ENCODE measurements at regions of chr17 and their contacts with region 1.

Region 1: DNA sequence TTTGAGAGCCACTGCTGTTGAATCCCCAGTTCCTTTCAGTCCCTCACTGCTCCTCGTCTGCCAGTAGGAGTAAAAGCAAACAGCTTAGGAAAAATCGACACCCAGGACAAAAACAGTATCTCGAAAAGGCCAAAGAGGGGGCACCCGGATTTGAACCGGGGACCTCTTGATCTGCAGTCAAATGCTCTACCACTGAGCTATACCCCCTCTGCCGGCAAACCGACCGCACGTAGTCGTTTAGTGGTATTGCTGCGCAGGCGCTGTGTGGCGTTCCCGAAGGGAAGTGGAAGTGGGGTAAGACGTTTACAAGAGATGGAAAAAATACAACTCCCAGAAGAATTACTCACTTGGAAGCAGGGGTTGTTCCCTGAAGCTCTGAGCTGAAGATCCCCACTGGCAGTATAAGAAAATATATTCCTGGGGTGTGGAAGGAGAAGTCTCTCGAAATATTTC is 2.2 kb upstream of the PLXDC1 start:
- DNase-seq: peak; percentile 93
- H3K4me3 ChIP-seq: peak overlapping the region; percentile 35 to 82 (median 68)
- H3K27ac ChIP-seq: peak overlapping the region; percentile 0
- H3K4me1 ChIP-seq: peaks cover 8% of the 10 kb centered on the region
- H3K27me3 ChIP-seq: peaks cover 19 to 27% of the 10 kb centered on the region in 2 experiments
- CTCF ChIP-seq: peak in 1 of 2 donors; percentile 4
- POLR2A ChIP-seq: no peak

Region 2: DNA sequence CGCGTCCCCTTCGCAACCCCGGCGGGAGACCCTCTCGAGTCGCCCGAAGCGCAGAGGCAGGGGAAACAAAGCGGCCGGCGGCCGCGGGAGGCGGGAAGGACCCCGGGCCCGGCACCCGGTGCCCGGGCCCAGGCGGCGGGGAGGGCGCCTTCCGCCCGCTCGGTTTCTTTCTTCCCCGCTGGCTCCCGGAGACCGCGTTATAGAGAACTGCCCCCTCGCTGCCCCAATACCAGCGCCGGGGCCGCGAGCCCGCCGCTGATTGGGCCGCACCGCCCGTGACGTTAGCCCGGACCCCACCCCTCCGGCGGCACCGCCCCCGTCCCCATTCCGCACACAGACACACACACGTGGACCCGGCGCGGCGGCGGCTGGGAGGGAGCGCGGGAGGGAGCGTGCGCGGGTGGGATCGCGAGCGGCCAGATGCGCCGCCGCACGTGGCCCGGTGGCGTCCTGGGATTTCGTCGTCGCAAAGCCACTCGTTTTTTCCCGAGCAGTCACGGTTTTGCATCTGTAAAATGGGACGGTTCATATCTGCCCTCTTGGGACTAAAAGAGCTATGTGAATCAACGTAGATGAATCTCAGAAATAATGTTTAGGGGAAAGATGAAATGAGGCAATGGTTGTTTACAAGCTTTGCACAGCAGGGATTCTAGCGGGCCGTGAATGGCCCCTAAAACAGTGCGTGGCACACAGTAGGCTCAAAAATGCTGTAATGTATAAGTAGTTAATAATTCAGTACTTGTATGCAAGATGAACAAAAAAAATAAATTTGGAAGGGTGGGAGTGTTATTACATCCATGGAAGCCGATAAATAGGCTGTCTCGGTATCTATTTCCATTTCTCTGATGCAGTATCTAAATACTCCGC is 478.6 kb before region 1 on chr17 and contains the start of gene EPOP:
- CTCF ChIA-PET with region 1: interaction called, 4 read pairs
- POLR2A ChIA-PET with region 1: no interaction called
- dilution Hi-C with region 1: no loop called
- intact Hi-C with region 1: loop called (anchors 1 kb)
- DNase-seq: peak; percentile 85
- H3K4me3 ChIP-seq: peak within 1 kb of the TSS; percentile 32 to 63 (median 41)
- H3K27ac ChIP-seq: no peak within 1 kb of the TSS
- H3K4me1 ChIP-seq: peaks cover 14% of the 10 kb centered on the region
- H3K27me3 ChIP-seq: peaks cover 28 to 39% of the 10 kb centered on the region in 2 experiments
- CTCF ChIP-seq: no peak
- POLR2A ChIP-seq: no peak
- total RNA-seq, gene EPOP: 2.6 and 2.9 TPM in 2 replicates

Region 3: DNA sequence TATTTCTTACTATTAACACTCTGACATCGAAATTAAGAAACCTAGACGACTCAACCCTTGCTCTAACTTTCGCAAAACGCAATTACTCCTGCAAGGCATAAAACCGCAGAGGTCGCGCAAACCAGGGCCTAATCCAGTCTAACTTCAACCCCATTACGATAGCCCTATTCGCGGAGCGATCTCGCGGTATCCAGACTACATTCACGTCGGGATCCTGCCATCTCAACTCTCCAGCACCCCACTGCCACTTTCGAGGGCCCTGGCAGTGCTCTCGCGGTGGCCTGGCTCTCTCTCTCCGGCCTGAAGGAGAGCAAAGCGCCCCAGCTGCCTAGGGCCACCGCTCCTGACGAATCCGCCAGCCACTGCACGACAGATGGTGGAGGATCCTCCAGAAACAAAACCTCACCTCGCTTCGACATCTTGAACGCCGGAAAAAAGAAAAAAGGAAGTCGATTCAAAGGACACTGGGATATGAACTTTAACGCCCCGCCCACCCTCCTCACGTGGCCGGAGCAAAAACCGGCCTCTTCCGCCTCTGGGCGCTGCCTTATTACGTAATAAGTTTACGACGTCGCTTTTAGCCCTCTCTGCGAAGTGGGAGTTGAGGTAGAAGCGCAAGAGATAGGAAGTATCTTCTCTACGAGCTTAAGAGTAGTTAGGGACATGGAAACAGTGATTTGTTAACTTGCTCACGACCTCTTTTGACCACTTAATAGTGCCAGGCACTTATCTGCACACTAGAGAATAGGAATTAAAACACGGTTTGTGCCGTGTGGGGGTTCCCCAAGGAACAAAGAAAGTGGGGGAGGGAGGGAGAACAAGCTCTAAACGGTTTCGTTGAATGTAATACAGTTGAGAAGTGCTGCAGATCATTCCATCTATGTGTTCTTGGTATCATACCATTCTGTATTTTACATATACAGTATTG is 300.1 kb before region 1 on chr17 and contains the start of gene RPL23:
- CTCF ChIA-PET with region 1: interaction called, 4 read pairs
- POLR2A ChIA-PET with region 1: no interaction called
- dilution Hi-C with region 1: no loop called
- intact Hi-C with region 1: loop called (anchors 1 kb)
- DNase-seq: peak; percentile 98
- H3K4me3 ChIP-seq: peak within 1 kb of the TSS; percentile 82 to 93 (median 91)
- H3K27ac ChIP-seq: peak within 1 kb of the TSS; percentile 84
- H3K4me1 ChIP-seq: peaks cover 19% of the 10 kb centered on the region
- H3K27me3 ChIP-seq: no peaks in the 10 kb centered on the region
- CTCF ChIP-seq: no peak
- POLR2A ChIP-seq: peak; percentile 97
- total RNA-seq, gene RPL23: 1,270 and 1,292 TPM in 2 replicates

Region 4: GRCh38 chr17:38967290-38967738 is 186.3 kb before region 1 on chr17 and contains the start of gene FBXO47:
- CTCF ChIA-PET with region 1: interaction called, 15 read pairs
- POLR2A ChIA-PET with region 1: interaction called, 4 read pairs
- dilution Hi-C with region 1: no loop called
- intact Hi-C with region 1: loop called (anchors 5 kb)
- DNase-seq: peak; percentile 93
- H3K4me3 ChIP-seq: peak within 1 kb of the TSS in 2 of 3 experiments; percentile 24 to 34
- H3K27ac ChIP-seq: no peak within 1 kb of the TSS
- H3K4me1 ChIP-seq: no peaks in the 10 kb centered on the region
- H3K27me3 ChIP-seq: peaks cover 0 to 4% of the 10 kb centered on the region in 2 experiments
- CTCF ChIP-seq: no peak
- POLR2A ChIP-seq: peak; percentile 63
- total RNA-seq, gene FBXO47: not detected in 2 replicates

Region 5: DNA sequence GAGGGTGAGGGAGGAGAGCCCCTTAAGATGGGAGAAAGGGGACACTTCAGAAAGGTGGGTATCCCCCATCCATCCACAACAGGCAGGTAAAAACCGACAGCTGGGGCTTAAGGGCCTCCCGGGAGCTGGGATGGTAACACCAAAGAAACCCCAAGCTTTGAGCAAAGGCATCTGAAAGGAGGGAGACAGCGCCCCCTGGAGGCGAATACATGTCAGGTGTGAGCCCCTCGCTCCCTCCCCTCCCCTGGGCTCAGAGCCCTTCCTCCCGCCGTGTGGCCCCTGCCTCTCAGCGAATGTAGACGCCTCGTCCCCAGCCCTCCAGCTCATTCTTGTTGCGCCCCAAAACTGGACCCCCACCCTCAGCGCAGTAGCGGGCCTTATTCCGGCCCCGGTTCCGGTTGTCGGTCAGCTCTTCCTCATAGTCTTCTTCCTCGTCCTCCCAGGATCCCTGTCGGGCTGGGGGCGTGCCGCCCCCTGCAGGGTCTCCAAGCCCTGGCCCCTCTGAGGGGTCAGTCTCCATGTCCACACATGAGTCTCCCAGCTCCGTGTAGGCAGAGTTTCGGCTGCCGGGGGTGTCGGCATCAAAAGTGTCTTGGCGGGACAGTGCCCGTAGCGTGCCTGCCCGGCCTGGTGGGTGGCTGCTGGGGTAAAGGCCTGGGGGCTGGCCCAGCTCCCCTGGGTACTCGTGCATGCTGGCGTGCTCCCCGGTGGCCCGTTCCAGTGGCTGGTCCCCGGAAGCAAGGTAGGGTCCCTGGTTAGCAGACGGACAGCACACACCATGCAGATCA is 21.5 kb after region 1 on chr17:
- CTCF ChIA-PET with region 1: interaction called, 38 read pairs
- POLR2A ChIA-PET with region 1: no interaction called
- dilution Hi-C with region 1: no loop called
- intact Hi-C with region 1: no loop called
- DNase-seq: peak; percentile 44
- H3K4me3 ChIP-seq: no peak overlapping the region
- H3K27ac ChIP-seq: no peak overlapping the region
- H3K4me1 ChIP-seq: peaks cover 12% of the 10 kb centered on the region
- H3K27me3 ChIP-seq: no peaks in the 10 kb centered on the region
- CTCF ChIP-seq: peak; percentile 67 to 91
- POLR2A ChIP-seq: no peak

Region 6: DNA sequence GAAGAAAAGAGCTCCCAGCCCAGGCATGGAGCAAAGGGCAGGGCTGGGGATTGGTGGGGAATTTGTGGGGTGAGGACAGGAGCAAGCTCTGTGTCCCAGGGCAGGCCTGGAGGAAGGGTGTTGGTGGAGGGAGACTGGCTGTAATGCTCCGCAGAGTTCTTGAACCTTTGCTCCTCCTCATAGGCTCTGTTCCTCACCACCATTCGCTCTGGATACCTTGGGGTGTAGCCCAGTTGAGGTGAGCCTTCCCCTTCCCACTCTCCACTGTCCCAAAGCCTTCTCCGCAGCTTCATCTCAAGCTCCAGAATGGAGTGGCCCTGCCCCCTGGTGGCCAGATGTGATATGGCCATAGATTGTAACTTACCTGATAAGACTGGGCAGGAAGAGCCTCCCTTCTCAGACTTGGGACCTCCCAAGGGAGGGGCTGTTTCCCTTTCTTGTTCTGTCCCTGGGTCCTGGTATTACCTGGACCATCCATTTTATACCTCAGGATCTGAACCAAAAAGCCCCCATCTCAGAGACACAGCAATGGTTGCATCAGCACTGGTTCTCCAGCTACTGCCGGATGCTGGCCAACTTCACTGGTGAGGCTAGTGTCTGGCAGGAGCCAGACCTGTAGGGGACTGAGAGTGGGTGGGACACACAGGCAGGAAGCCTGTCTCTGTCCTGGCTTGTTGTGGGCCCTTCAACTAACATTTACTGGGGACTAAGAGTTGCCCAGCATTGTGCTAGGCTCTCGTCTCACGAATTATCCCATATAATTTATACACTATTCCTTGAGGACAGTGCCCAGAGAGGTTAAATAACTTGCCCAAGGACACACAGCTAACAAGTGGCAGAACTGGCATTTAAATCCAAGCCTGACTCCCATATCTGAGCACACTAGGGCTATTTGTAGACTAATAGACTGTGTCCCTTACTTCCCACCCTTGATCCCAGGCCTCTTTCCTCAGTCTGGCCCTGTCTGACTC is 91.3 kb after region 1 on chr17:
- CTCF ChIA-PET with region 1: interaction called, 17 read pairs
- POLR2A ChIA-PET with region 1: no interaction called
- dilution Hi-C with region 1: no loop called
- intact Hi-C with region 1: no loop called
- DNase-seq: peak; percentile 82
- H3K4me3 ChIP-seq: no peak overlapping the region
- H3K27ac ChIP-seq: no peak overlapping the region
- H3K4me1 ChIP-seq: no peaks in the 10 kb centered on the region
- H3K27me3 ChIP-seq: no peaks in the 10 kb centered on the region
- CTCF ChIP-seq: peak; percentile 84 to 92
- POLR2A ChIP-seq: no peak

Measured in endothelial cell of umbilical vein (primary cell).